ENCODE measurements at regions of chr14 and their contacts with region 1.

Region 1: GRCh38 chr14:49497725-49498348 is 88.3 kb downstream of the RPS29 start:
- DNase-seq: no peak
- H3K4me3 ChIP-seq: no peak overlapping the region
- H3K27ac ChIP-seq: no peak overlapping the region
- H3K4me1 ChIP-seq: no peaks in the 10 kb centered on the region
- H3K27me3 ChIP-seq: no peaks in the 10 kb centered on the region
- CTCF ChIP-seq: peak; percentile 79

Region 2: GRCh38 chr14:49461529-49462401 is 36.1 kb before region 1 on chr14:
- intact Hi-C with region 1: loop called (anchors 2 kb)
- DNase-seq: peak; percentile 78
- H3K4me3 ChIP-seq: no peak overlapping the region
- H3K27ac ChIP-seq: no peak overlapping the region
- H3K4me1 ChIP-seq: no peaks in the 10 kb centered on the region
- H3K27me3 ChIP-seq: no peaks in the 10 kb centered on the region
- CTCF ChIP-seq: peak; percentile 77

Region 3: DNA sequence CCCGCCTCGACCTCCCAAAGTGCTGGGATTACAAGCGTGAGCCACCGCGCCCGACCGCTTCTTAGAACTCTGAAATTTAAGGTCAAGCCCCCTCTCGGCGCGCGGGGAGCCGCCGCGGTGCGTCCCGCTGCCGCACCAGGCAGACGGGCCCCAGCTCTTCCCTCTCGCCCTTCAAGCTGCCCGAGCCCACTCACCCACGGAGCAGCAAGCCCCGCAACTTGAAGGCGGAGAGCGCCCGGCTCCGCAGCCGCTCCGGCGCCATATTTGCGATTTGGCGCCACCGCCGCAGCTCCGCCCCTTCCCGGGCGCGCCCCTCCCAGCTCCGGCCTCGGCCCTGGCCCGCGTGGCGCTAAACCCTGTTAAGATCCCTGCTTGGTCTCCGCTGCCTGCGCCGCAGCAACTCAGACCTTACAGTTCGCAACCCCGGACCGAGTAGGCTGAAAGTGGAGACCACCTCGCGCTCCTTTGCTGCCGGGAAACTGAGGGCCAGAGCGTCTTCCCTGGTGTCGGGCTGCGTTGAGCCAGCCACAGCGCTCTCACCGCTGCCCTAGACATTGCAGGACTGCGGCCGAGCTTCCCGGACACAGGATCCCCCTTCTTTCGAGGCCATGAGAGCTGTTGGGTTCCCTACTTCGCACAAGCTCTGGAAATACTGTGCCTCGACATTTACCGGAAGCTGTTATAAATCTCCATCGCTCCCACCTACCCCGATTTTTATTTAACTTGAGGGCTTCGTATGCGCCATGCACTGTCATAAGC is 190.3 kb after region 1 on chr14 and contains the start of gene POLE2:
- intact Hi-C with region 1: no loop called
- DNase-seq: peak; percentile 78
- H3K4me3 ChIP-seq: peak within 1 kb of the TSS; percentile 57
- H3K27ac ChIP-seq: peak within 1 kb of the TSS; percentile 69
- H3K4me1 ChIP-seq: no peaks in the 10 kb centered on the region
- H3K27me3 ChIP-seq: no peaks in the 10 kb centered on the region
- CTCF ChIP-seq: no peak
- total RNA-seq, gene POLE2: 2.5 to 15.9 TPM

Measured in colonic mucosa (tissue), 4 donors.